Transverse colon (tissue), 4 donors: ENCODE measurements at regions of chr13 and their contacts with region 1.

Region 1: DNA sequence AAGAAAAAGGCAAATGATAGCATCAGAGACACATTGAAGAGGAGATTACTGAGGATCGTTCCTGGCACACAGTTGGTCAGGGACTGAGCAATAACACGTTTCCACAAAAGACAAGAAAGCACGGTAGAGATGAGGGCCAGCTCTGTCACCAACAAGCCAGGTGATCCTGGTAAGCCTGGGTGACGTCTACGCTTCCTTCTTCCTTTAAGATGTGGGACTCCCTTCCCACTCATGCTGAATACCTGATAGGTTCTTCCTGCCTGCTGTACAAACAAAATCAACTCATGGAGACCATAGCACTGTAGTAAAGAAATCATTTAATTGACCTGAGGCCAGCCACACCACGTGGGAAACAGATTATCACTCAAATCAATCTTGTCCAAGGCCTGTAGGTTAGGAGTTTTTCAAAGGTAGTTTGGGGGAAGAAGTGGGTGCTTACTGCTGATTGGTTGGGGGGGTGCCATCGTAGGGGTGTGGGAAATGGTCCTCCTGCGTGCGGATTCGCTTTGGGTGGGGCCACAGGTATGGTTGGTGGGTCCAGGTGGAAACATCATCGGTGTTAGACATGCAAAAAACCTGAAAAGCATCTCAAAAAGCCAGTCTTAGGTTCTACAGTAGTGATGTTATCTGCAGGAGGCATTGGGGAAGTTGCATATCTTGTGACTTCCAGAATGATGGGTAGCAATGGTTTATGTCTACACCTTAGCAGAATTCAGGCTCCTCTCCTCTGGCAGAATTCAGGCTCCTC is 19.5 kb upstream of the COG3 start:
- DNase-seq: no peak
- H3K4me3 ChIP-seq: no peak overlapping the region
- H3K27ac ChIP-seq: no peak overlapping the region
- H3K4me1 ChIP-seq: peaks cover 0 to 22% (median 5%) of the 10 kb centered on the region in 4 donors
- H3K27me3 ChIP-seq: no peaks in the 10 kb centered on the region
- CTCF ChIP-seq: no peak
- EP300 ChIP-seq: no peak
- POLR2A ChIP-seq: no peak

Region 2: GRCh38 chr13:44609137-44609536 is 836.1 kb before region 1 on chr13:
- in situ Hi-C with region 1: no loop called
- intact Hi-C with region 1: no loop called
- DNase-seq: no peak
- H3K4me3 ChIP-seq: no peak overlapping the region
- H3K27ac ChIP-seq: no peak overlapping the region
- H3K4me1 ChIP-seq: no peaks in the 10 kb centered on the region
- H3K27me3 ChIP-seq: no peaks in the 10 kb centered on the region
- CTCF ChIP-seq: no peak
- EP300 ChIP-seq: no peak
- POLR2A ChIP-seq: no peak

Region 3: DNA sequence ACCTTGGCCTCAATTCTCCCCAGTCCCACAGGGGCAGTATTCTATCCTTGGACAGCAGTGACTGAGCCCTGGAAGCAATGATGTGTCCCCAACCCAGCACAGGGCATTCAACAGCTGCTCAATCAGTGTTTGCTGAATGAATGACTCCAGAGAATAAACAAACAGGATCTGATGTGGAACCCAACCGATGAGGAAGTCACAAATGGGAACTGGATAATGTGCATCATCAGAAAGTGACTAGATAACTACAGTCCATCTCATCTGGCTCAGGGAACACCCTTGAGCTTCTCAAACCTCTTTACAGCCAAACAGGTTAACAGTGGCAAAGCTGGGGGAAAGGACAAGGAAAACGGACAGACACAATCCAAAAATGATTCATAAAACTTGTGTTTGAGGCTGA is 35.2 kb before region 1 on chr13:
- in situ Hi-C with region 1: no loop called
- intact Hi-C with region 1: loop called (anchors 1 kb)
- DNase-seq: no peak
- H3K4me3 ChIP-seq: no peak overlapping the region
- H3K27ac ChIP-seq: no peak overlapping the region
- H3K4me1 ChIP-seq: peaks cover 0 to 17% (median 7%) of the 10 kb centered on the region in 4 donors
- H3K27me3 ChIP-seq: no peaks in the 10 kb centered on the region
- CTCF ChIP-seq: no peak
- EP300 ChIP-seq: no peak
- POLR2A ChIP-seq: no peak

Region 4: DNA sequence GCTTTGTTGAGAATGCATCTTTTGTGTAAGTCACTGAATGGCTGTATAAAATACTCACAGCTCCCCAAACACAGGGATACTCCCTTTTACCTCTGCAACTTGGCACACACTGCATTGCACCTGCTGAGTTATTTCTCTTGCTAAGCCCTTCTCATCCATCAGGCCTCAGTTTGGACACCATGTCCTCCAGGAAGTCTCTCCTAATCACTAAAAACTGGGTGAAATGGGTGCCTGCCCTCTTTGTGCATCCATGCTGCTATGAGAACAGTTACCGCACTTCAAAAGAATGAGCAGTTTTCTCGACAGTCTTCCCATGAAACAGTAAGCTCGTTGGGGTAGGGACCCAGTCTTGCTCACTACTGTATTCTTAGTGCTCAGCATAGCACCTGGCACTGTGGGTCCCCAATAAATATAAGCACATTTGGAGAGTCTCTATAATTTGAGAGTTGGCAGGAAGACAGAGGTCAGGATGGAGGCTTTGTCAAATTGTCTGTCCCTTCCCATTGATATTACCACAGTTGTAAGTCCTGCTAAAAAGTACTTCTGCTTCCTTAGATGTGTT is 22.4 kb before region 1 on chr13:
- in situ Hi-C with region 1: no loop called
- intact Hi-C with region 1: no loop called
- DNase-seq: no peak
- H3K4me3 ChIP-seq: no peak overlapping the region
- H3K27ac ChIP-seq: peak overlapping the region in 3 of 4 donors; percentile 20 to 38 (median 34)
- H3K4me1 ChIP-seq: peaks cover 0 to 9% (median 8%) of the 10 kb centered on the region in 4 donors
- H3K27me3 ChIP-seq: no peaks in the 10 kb centered on the region
- CTCF ChIP-seq: no peak
- EP300 ChIP-seq: no peak
- POLR2A ChIP-seq: no peak